ENCODE measurements at regions of chr4 and their contacts with region 1.

Region 1: GRCh38 chr4:23219779-23220408 is 527.2 kb downstream of the GBA3 start:
- DNase-seq: no peak
- ATAC-seq: no peak
- H3K4me3 ChIP-seq: no peak overlapping the region
- H3K27ac ChIP-seq: no peak overlapping the region
- H3K4me1 ChIP-seq: no peaks in the 10 kb centered on the region
- H3K27me3 ChIP-seq: no peaks in the 10 kb centered on the region
- CTCF ChIP-seq: no peak
- EP300 ChIP-seq: no peak
- POLR2A ChIP-seq: no peak
- RAD21 ChIP-seq: no peak

Region 2: GRCh38 chr4:23144707-23145106 is 75.2 kb before region 1 on chr4:
- CTCF ChIA-PET with region 1: no interaction called
- POLR2A ChIA-PET with region 1: no interaction called
- RAD21 ChIA-PET with region 1: no interaction called
- SMC1A ChIA-PET with region 1: no interaction called
- in situ Hi-C with region 1: no loop called
- intact Hi-C with region 1: no loop called
- DNase-seq: no peak
- ATAC-seq: no peak
- H3K4me3 ChIP-seq: no peak overlapping the region
- H3K27ac ChIP-seq: no peak overlapping the region
- H3K4me1 ChIP-seq: no peaks in the 10 kb centered on the region
- H3K27me3 ChIP-seq: no peaks in the 10 kb centered on the region; a peak in 1 of 4 replicates
- CTCF ChIP-seq: no peak
- EP300 ChIP-seq: no peak
- POLR2A ChIP-seq: no peak
- RAD21 ChIP-seq: no peak

Region 3: DNA sequence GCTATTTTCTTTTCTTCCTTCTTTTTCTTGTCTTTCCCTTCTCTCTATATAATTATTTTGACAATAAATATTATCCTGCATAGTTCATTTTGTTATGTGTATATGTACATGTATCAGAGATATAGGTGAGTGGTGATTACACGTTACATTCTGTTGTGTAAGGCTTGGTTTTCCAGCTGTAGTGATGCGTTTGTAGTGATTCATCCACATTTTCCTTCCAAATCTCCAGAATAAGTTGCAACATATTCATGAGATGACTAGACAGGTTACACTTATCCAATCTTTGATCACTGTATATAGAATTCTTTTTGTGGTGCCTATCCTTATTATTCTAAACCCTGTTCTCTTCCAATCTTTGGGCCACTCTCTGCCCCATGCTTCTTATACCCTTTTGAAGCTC is 13.1 kb after region 1 on chr4:
- CTCF ChIA-PET with region 1: interaction called, 5 read pairs
- POLR2A ChIA-PET with region 1: no interaction called
- RAD21 ChIA-PET with region 1: interaction called, 3 read pairs
- SMC1A ChIA-PET with region 1: interaction called, 11 read pairs
- in situ Hi-C with region 1: no loop called
- intact Hi-C with region 1: no loop called
- DNase-seq: no peak
- ATAC-seq: no peak
- H3K4me3 ChIP-seq: no peak overlapping the region
- H3K27ac ChIP-seq: no peak overlapping the region
- H3K4me1 ChIP-seq: no peaks in the 10 kb centered on the region
- H3K27me3 ChIP-seq: no peaks in the 10 kb centered on the region
- CTCF ChIP-seq: no peak
- EP300 ChIP-seq: no peak
- POLR2A ChIP-seq: no peak
- RAD21 ChIP-seq: no peak

Region 4: GRCh38 chr4:23245203-23245832 is 25.4 kb after region 1 on chr4:
- CTCF ChIA-PET with region 1: no interaction called
- POLR2A ChIA-PET with region 1: no interaction called
- RAD21 ChIA-PET with region 1: no interaction called
- SMC1A ChIA-PET with region 1: no interaction called
- in situ Hi-C with region 1: no loop called
- intact Hi-C with region 1: no loop called
- DNase-seq: no peak
- ATAC-seq: no peak
- H3K4me3 ChIP-seq: no peak overlapping the region
- H3K27ac ChIP-seq: no peak overlapping the region
- H3K4me1 ChIP-seq: no peaks in the 10 kb centered on the region
- H3K27me3 ChIP-seq: no peaks in the 10 kb centered on the region
- CTCF ChIP-seq: no peak
- EP300 ChIP-seq: no peak
- POLR2A ChIP-seq: no peak
- RAD21 ChIP-seq: no peak